Sciatic nerve (tissue), 2 donors: ENCODE measurements at regions of chr2 and their contacts with region 1.

Region 1: GRCh38 chr2:241514986-241515737 is 6.8 kb upstream of the STK25 start:
- DNase-seq: no peak
- ATAC-seq: no peak

Region 2: GRCh38 chr2:241139531-241140444 is 375.4 kb before region 1 on chr2:
- intact Hi-C with region 1: loop called (anchors 5 kb)
- DNase-seq: no peak
- ATAC-seq: no peak

Region 3: GRCh38 chr2:241300000-241300399 is 215.2 kb before region 1 on chr2:
- intact Hi-C with region 1: no loop called
- DNase-seq: no peak
- ATAC-seq: no peak